Esophagus muscularis mucosa (tissue), 4 donors: ENCODE measurements at regions of chr13 and their contacts with region 1.

Region 1: DNA sequence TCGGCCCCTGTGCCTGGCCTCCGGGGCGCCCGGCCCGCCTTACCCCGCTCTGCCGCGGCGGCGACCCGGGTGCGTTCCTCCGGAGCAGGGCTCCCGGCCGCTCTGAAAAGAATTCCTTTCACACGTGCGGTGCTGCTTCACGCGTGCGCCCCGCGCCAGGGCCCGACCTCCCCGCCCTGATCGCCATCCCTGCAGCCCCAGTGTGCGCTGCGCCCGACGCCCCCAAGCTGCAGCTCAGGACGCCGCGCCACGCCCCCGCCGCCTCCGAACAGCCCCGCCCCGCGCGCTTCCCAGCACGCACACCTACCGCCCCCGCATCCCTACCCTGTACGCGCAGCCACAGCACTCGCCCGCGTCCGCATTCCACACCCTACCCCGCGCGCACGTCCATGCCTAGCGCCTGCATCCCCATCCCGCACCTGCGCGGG is at the start of gene GJA3:
- DNase-seq: no peak
- H3K4me3 ChIP-seq: peak within 1 kb of the TSS; percentile 47 to 58 (median 49)
- H3K27ac ChIP-seq: no peak within 1 kb of the TSS
- H3K4me1 ChIP-seq: peaks cover 14 to 21% (median 19%) of the 10 kb centered on the region in 4 donors
- H3K27me3 ChIP-seq: peaks cover 8 to 87% (median 58%) of the 10 kb centered on the region in 4 donors
- CTCF ChIP-seq: no peak
- EP300 ChIP-seq: no peak
- POLR2A ChIP-seq: no peak
- total RNA-seq, gene GJA3: not detected

Region 2: DNA sequence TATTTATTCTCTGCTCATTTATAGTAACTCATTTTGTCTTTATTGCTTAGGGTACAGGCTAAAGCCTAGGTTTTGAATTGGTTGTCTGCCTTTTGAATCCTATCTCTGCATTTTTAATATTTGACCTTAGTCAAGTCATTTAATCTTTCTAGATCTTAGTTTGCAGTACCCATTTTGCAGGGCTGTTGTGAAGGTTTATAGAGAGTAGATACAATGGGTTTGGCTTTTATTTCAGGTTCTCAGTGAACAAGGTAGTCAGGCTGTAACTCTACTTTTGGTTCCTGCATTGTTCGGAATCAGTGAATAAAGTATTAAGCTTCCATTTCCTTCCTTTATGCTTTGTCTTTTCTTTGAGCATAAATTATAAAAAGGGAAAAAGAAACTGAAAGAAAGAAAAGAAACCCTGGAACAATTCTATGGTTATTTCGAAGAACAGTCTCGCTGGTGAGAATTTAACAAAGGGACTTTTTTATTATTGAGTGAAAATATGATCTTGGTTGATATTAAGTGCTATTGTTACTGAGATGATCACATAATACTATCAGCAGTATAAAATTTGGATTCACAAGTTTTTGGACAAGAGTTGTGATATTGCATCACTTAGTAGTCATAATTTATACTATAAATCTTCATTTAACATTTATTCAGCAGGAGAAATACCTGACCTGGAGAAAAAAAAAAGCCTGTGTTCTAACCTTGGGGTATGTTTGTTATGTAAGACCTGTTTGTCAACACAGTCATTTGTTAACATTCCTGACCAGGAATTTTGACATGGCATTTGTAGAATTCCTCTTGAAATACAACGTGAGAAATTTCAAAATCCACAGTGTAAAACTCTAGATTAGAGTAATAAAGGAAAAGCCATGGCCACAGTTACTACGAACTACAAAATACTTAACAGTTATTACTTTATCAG is 111.0 kb before region 1 on chr13:
- intact Hi-C with region 1: loop called (anchors 10 kb)
- DNase-seq: no peak
- H3K4me3 ChIP-seq: no peak overlapping the region
- H3K27ac ChIP-seq: no peak overlapping the region
- H3K4me1 ChIP-seq: peaks cover 11 to 19% (median 14%) of the 10 kb centered on the region in 4 donors
- H3K27me3 ChIP-seq: no peaks in the 10 kb centered on the region
- CTCF ChIP-seq: no peak
- EP300 ChIP-seq: no peak
- POLR2A ChIP-seq: no peak

Region 3: GRCh38 chr13:20090349-20090748 is 70.5 kb before region 1 on chr13:
- intact Hi-C with region 1: loop called (anchors 5 kb)
- DNase-seq: no peak
- H3K4me3 ChIP-seq: no peak overlapping the region
- H3K27ac ChIP-seq: no peak overlapping the region
- H3K4me1 ChIP-seq: no peaks in the 10 kb centered on the region
- H3K27me3 ChIP-seq: no peaks in the 10 kb centered on the region
- CTCF ChIP-seq: peak in 1 of 3 experiments; percentile 7
- EP300 ChIP-seq: no peak
- POLR2A ChIP-seq: no peak

Region 4: GRCh38 chr13:20118268-20119140 is 42.4 kb before region 1 on chr13:
- intact Hi-C with region 1: loop called (anchors 5 kb)
- DNase-seq: no peak
- H3K4me3 ChIP-seq: peak overlapping the region; percentile 77 to 82 (median 79)
- H3K27ac ChIP-seq: peak overlapping the region; percentile 91 to 95 (median 92)
- H3K4me1 ChIP-seq: peaks cover 11 to 23% (median 17%) of the 10 kb centered on the region in 4 donors
- H3K27me3 ChIP-seq: no peaks in the 10 kb centered on the region
- CTCF ChIP-seq: no peak
- EP300 ChIP-seq: no peak
- POLR2A ChIP-seq: no peak